B cell (primary cell): ENCODE measurements at regions of chr4 and their contacts with region 1.

Region 1: GRCh38 chr4:3880615-3881120 is 114.5 kb downstream of the ADRA2C start:
- DNase-seq: peak; percentile 78
- ATAC-seq: peak; percentile 87
- H3K4me3 ChIP-seq: peak overlapping the region in 3 of 5 experiments; percentile 2 to 42 (median 25)
- H3K4me3 Mint-ChIP-seq: peak overlapping the region; percentile 61
- H3K27ac ChIP-seq: no peak overlapping the region
- H3K27ac Mint-ChIP-seq: no peak overlapping the region
- H3K4me1 ChIP-seq: peaks cover 14 to 18% of the 10 kb centered on the region in 2 donors
- H3K4me1 Mint-ChIP-seq: peaks cover 17% of the 10 kb centered on the region
- H3K27me3 ChIP-seq: peaks cover 0 to 25% (median 9%) of the 10 kb centered on the region in 4 experiments
- H3K27me3 Mint-ChIP-seq: peaks cover 43% of the 10 kb centered on the region
- CTCF ChIP-seq: peak; percentile 69

Region 2: DNA sequence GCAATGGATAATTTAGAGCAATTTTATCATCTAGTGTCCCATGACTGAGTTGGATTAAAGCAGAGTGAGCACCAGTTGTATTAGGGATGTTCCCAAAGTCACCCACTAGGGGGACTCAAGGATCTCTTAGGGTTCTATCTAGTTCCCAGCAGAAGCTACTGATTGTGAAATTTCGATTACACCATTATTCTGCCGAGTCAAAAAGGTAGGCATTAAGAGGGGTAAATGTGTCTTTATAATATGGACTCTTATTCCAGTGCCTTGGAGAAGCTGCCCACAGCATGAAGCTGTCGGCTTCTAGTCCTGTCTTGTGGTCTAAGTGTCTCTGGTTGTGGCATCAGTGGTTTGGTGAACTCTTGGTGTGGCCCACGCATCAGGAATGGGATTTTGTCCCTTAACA is 534.5 kb before region 1 on chr4:
- CTCF ChIA-PET with region 1: interaction called, 15 read pairs
- POLR2A ChIA-PET with region 1: no interaction called
- intact Hi-C with region 1: no loop called
- DNase-seq: peak; percentile 82
- ATAC-seq: peak; percentile 70
- H3K4me3 ChIP-seq: no peak overlapping the region
- H3K4me3 Mint-ChIP-seq: no peak overlapping the region
- H3K27ac ChIP-seq: no peak overlapping the region
- H3K27ac Mint-ChIP-seq: no peak overlapping the region
- H3K4me1 ChIP-seq: peaks cover 0 to 4% of the 10 kb centered on the region in 2 donors
- H3K4me1 Mint-ChIP-seq: peaks cover 7% of the 10 kb centered on the region
- H3K27me3 ChIP-seq: no peaks in the 10 kb centered on the region
- H3K27me3 Mint-ChIP-seq: no peaks in the 10 kb centered on the region
- CTCF ChIP-seq: peak; percentile 99